Posterior vena cava (tissue), 2 donors: ENCODE measurements at regions of chr16 and their contacts with region 1.

Region 1: GRCh38 chr16:5401658-5402057 is 304.1 kb upstream of the EEF2KMT start:
- DNase-seq: no peak

Region 2: DNA sequence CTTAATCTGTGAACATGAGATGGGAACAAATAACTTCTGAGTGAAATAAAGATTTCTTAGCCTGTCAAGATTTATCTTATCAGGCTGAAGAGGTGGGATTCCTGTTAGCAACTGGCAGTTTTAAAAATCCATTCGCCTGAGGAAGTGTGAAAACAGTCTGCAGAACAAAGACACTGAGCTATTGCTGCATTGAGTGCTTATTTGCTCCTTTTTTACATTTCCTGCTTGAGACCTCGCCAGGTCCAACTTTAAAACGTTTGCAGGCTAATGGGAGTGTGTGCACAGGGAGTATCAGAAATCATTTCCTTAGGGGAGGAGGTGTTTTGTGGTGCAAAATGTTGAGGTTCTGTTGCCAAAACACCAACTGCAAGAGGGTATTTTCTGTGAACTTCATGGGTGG is 973.2 kb after region 1 on chr16:
- intact Hi-C with region 1: loop called in 1 of 2 experiments (anchors 5 kb)
- DNase-seq: no peak